Activated CD4-positive, alpha-beta memory T cell treated with anti-CD3 and anti-CD28 coated beads for 36 hours (primary cell): ENCODE measurements at regions of chr2 and their contacts with region 1.

Region 1: GRCh38 chr2:8514796-8515758 is 166.8 kb upstream of the ID2 start:
- DNase-seq: peak; percentile 82
- H3K4me3 Mint-ChIP-seq: peak overlapping the region; percentile 59
- H3K27ac Mint-ChIP-seq: peak overlapping the region; percentile 98
- H3K4me1 Mint-ChIP-seq: peaks cover 66% of the 10 kb centered on the region
- H3K27me3 Mint-ChIP-seq: no peaks in the 10 kb centered on the region

Region 2: DNA sequence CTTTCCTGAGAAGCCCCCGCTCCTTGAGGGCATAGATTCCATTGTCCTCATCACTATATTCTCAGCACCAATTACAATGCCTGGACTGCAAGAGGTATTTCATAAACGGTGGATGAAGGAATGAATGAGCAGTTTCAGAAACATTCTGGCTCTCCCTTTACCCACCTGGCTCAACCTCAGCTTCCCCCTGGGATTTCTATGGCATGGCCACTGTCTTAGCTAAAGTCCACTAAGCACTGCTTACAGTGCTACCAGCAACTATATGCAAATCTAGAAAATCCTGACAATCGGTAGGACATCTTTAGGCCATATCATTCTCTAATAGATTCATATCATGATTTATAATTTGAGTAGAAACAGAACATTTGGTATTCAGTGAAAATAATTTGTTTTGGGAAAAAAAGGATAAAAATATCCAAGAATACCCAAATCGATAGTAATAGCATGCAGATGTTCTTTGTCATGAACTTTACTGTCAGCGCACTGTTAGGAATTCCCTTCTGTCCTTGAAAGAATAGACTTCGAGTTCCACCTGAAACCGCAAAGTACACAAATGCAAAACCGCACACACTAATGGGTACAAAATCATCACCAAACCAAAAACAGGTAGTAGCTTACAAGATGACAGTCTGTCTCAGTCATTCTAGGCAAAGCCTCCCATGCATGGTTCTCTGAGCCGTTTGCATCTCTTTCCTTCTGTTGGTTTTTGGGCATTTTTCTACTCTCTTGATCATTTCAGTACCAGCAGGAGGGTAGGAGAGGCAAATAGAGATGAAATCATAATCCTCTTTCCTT is 136.9 kb before region 1 on chr2:
- CTCF ChIA-PET with region 1: no interaction called
- POLR2A ChIA-PET with region 1: interaction called, 3 read pairs
- intact Hi-C with region 1: loop called (anchors 1 kb)
- DNase-seq: peak; percentile 49
- H3K4me3 Mint-ChIP-seq: no peak overlapping the region
- H3K27ac Mint-ChIP-seq: peak overlapping the region; percentile 56
- H3K4me1 Mint-ChIP-seq: peaks cover 38% of the 10 kb centered on the region
- H3K27me3 Mint-ChIP-seq: no peaks in the 10 kb centered on the region

Region 3: GRCh38 chr2:8456151-8456845 is 58.8 kb before region 1 on chr2:
- CTCF ChIA-PET with region 1: no interaction called
- POLR2A ChIA-PET with region 1: no interaction called
- intact Hi-C with region 1: loop called (anchors 2 kb)
- DNase-seq: peak; percentile 73
- H3K4me3 Mint-ChIP-seq: peak overlapping the region; percentile 68
- H3K27ac Mint-ChIP-seq: peak overlapping the region; percentile 80
- H3K4me1 Mint-ChIP-seq: peaks cover 43% of the 10 kb centered on the region
- H3K27me3 Mint-ChIP-seq: no peaks in the 10 kb centered on the region

Region 4: DNA sequence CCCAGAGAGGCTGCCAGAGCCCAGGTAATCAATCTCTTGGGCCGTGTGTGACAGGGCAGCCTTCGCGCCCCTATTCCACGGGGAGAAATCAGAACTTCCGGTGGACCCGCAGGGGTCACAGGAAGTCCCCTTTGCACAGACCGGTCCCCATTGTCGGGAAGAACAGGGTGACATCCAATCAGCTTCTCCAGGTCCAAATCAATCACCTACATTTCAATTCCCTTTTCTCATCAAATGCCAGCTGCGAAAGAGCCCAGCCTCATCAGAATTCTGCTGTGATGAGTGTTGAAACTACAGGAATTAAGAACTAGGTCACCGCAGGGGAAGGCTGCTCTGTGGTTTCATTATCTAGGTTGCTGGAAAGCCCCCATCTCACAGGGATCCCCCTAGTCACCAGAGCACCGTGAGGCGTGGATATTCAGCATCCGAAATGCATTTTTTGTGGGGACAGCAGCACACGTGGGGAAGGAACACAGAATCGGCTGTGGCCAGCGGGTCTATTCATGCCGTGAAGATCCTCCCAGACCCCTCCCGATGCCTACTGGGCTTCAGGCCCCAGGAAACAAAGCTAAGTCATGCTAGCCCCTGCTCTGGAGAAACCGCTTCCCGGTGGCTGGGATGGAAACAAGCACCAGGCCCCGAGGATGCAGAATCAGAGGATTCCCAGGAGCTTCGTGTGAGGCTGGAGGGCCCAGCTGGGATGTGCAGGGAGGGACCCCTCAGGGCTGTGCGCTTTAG is 26.9 kb before region 1 on chr2:
- CTCF ChIA-PET with region 1: interaction called, 6 read pairs
- POLR2A ChIA-PET with region 1: interaction called, 67 read pairs
- intact Hi-C with region 1: loop called (anchors 1 kb)
- DNase-seq: peak; percentile 88
- H3K4me3 Mint-ChIP-seq: peak overlapping the region; percentile 77
- H3K27ac Mint-ChIP-seq: peak overlapping the region; percentile 91
- H3K4me1 Mint-ChIP-seq: peaks cover 72% of the 10 kb centered on the region
- H3K27me3 Mint-ChIP-seq: no peaks in the 10 kb centered on the region

Region 5: DNA sequence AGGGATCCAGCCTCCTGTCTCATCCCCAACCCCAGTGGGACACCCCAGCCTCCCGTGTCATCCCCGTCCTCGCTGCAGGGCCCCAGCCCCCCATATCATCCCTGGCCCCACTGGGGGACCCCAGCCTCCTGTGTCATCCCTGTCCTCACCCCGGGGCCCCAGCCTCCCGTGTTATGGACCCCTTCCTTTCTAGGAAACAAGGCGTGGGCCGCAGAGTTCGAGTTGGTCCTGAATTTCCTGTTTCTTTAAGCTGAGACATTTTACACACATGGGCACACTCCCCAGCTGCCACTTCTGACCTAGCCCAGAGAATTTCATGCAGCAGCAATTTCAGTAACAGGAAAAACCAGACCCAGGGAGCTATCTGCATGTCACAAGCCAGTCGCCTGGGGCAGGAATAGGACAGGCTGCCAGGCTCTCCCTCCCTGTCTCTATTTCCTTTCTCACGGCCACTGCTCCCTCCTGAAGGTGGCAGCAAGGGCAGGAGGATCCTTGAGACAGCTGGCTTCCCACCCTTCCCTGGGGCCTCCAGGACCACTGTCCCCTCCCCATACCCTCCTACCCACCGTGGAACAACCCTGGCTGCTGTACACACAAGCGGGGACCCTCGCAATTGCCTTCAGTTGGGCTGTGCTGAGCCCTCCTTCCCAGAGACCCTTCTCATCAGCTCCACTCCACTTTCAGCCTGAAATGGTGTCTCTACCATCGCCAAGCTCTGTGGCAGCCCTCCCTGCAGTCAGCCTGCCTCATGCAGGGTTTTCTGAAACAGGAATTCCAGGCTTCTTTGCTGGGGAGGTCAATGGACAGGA is 24.9 kb after region 1 on chr2:
- CTCF ChIA-PET with region 1: interaction called, 27 read pairs
- POLR2A ChIA-PET with region 1: interaction called, 105 read pairs
- intact Hi-C with region 1: loop called (anchors 1 kb)
- DNase-seq: peak; percentile 34
- H3K4me3 Mint-ChIP-seq: no peak overlapping the region
- H3K27ac Mint-ChIP-seq: peak overlapping the region; percentile 100
- H3K4me1 Mint-ChIP-seq: peaks cover 78% of the 10 kb centered on the region
- H3K27me3 Mint-ChIP-seq: no peaks in the 10 kb centered on the region